Naive thymus-derived CD4-positive, alpha-beta T cell (primary cell): ENCODE measurements at regions of chr15 and their contacts with region 1.

Region 1: GRCh38 chr15:55637086-55637485 is 48.9 kb upstream of the PYGO1 start:
- DNase-seq: no peak
- ATAC-seq: no peak
- H3K4me3 ChIP-seq: no peak overlapping the region
- H3K4me3 Mint-ChIP-seq: no peak overlapping the region
- H3K27ac ChIP-seq: no peak overlapping the region
- H3K27ac Mint-ChIP-seq: no peak overlapping the region
- H3K4me1 ChIP-seq: no peaks in the 10 kb centered on the region
- H3K4me1 Mint-ChIP-seq: no peaks in the 10 kb centered on the region
- H3K27me3 ChIP-seq: no peaks in the 10 kb centered on the region
- H3K27me3 Mint-ChIP-seq: peaks cover 0 to 16% (median 6%) of the 10 kb centered on the region in 5 donors

Region 2: GRCh38 chr15:55526559-55527036 is 110.5 kb before region 1 on chr15:
- CTCF ChIA-PET with region 1: no interaction called
- POLR2A ChIA-PET with region 1: no interaction called
- intact Hi-C with region 1: loop called in 1 of 2 experiments (anchors 1 kb)
- DNase-seq: peak in 3 of 9 donors; percentile 0 to 9 (median 2)
- ATAC-seq: peak; percentile 77
- H3K4me3 ChIP-seq: no peak overlapping the region
- H3K4me3 Mint-ChIP-seq: no peak overlapping the region
- H3K27ac ChIP-seq: no peak overlapping the region
- H3K27ac Mint-ChIP-seq: no peak overlapping the region
- H3K4me1 ChIP-seq: no peaks in the 10 kb centered on the region
- H3K4me1 Mint-ChIP-seq: peaks cover 0 to 8% (median 0%) of the 10 kb centered on the region in 7 donors
- H3K27me3 ChIP-seq: no peaks in the 10 kb centered on the region
- H3K27me3 Mint-ChIP-seq: peaks cover 24 to 41% (median 28%) of the 10 kb centered on the region in 5 donors

Region 3: DNA sequence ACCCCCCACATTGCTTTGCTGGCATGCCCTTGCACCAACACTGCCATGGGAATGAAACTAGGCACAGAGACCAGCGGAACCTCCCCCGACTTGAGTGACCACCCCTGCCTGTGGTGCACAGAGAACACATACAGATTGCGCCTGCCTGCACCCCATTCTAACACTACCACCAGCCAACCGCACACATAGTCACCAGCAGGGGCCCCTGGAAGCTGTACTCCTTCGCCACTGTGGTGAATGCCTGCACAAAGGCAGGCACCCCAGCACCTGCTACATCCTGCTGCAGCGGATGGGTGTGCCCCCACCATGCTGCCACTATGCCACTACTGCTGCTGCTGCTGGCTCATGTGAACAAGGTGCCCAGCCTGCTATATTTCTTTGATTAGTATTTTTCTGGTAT is 101.7 kb before region 1 on chr15:
- CTCF ChIA-PET with region 1: no interaction called
- POLR2A ChIA-PET with region 1: no interaction called
- intact Hi-C with region 1: loop called in 1 of 2 experiments (anchors 2 kb)
- DNase-seq: peak in 4 of 9 donors; percentile 7 to 20 (median 9)
- ATAC-seq: peak; percentile 52
- H3K4me3 ChIP-seq: no peak overlapping the region
- H3K4me3 Mint-ChIP-seq: no peak overlapping the region
- H3K27ac ChIP-seq: no peak overlapping the region
- H3K27ac Mint-ChIP-seq: no peak overlapping the region
- H3K4me1 ChIP-seq: no peaks in the 10 kb centered on the region
- H3K4me1 Mint-ChIP-seq: peaks cover 0 to 7% (median 0%) of the 10 kb centered on the region in 7 donors
- H3K27me3 ChIP-seq: no peaks in the 10 kb centered on the region
- H3K27me3 Mint-ChIP-seq: peaks cover 7 to 28% (median 14%) of the 10 kb centered on the region in 5 donors

Region 4: GRCh38 chr15:56017920-56018319 is 380.8 kb after region 1 on chr15:
- CTCF ChIA-PET with region 1: no interaction called
- POLR2A ChIA-PET with region 1: no interaction called
- intact Hi-C with region 1: no loop called
- DNase-seq: no peak
- ATAC-seq: no peak
- H3K4me3 ChIP-seq: no peak overlapping the region
- H3K4me3 Mint-ChIP-seq: no peak overlapping the region
- H3K27ac ChIP-seq: no peak overlapping the region
- H3K27ac Mint-ChIP-seq: no peak overlapping the region
- H3K4me1 ChIP-seq: no peaks in the 10 kb centered on the region
- H3K4me1 Mint-ChIP-seq: no peaks in the 10 kb centered on the region
- H3K27me3 ChIP-seq: no peaks in the 10 kb centered on the region
- H3K27me3 Mint-ChIP-seq: peaks cover 6 to 21% (median 12%) of the 10 kb centered on the region in 5 donors